ENCODE measurements at regions of chr7 and their contacts with region 1.

Region 1: GRCh38 chr7:25259587-25260243 is 31.4 kb upstream of the NPVF start:
- DNase-seq: peak; percentile 52
- CTCF ChIP-seq: peak; percentile 72

Region 2: GRCh38 chr7:25031432-25031831 is 228.3 kb before region 1 on chr7:
- CTCF ChIA-PET with region 1: no interaction called
- POLR2A ChIA-PET with region 1: no interaction called
- DNase-seq: no peak
- CTCF ChIP-seq: no peak

Region 3: DNA sequence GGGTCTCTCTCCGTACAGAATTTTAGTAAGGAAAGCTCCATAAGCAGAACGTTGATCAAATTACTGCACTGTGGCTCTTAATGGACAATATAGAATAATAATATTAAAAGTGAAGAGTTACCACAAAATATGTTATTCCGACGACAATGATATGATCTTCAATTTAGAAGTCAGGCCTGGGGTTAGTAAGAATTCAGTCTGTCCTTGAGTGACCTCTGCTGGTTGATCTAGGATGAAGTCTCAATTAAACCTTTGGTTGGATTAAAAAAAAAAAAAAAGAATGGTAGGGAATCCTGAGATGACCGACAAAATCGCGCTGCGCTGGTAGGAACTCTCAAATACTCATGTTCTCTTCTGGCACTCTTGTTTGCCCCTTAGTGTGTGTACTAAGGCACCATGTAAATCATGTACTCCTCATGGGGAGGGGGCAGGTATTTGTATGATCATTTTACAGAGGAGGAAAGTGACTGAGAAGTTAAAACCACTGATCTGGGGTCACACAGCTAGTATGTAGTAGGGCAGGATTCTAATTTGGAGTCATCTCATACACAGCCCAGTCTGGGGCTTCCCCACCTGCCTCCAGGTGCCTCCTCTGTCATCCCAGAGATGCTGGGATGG is 129.9 kb after region 1 on chr7:
- CTCF ChIA-PET with region 1: interaction called, 12 read pairs
- POLR2A ChIA-PET with region 1: no interaction called
- DNase-seq: peak; percentile 21
- CTCF ChIP-seq: no peak